Endothelial cell of umbilical vein (primary cell): ENCODE measurements at regions of chr6 and their contacts with region 1.

Region 1: DNA sequence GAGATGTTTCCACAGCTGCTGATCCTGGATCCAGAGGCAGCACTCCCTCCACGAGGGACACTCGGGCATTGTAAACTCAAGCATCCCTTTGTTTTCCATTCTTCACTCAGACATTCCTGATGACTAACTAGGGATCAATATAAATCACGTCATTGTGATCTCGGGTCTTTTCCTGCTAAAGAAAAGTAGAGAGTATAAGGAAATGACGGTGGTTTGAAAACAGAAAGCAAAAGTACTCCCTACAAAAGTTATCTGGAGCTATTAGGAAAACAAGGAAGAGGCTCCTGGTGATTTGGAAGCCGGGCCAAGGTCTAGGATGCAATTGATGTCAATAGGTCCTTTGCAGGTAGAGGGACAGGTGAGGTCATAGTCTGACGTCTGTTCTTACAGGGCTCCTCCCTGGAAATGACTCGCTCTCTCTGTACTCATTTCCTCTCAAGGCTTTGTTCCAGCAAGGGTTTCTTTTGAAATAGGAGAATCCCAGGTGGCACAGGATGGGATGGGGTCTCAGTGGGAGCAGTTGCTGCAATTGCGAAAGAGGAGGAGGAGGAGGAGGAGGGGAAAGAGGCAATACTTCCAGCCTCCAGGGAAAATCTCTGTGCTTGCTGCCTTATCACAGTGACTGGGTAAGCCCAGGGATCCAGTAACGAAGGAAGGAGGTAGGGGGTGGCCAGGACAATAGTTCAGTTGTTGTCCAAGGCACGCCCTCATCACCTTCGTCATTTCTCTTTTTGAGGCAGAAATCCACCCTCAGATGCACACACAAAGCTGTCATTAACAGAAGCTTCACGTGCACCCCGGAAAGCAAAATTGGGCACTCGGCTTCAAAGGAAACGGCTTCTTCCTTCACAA is 222.9 kb downstream of the LY86 start:
- DNase-seq: peak; percentile 91
- H3K4me3 ChIP-seq: peak overlapping the region; percentile 24 to 69 (median 37)
- H3K27ac ChIP-seq: peak overlapping the region; percentile 91
- H3K4me1 ChIP-seq: peaks cover 17% of the 10 kb centered on the region
- H3K27me3 ChIP-seq: peaks cover 2 to 12% of the 10 kb centered on the region in 2 experiments
- CTCF ChIP-seq: no peak
- POLR2A ChIP-seq: no peak

Region 2: GRCh38 chr6:6686748-6687601 is 124.4 kb before region 1 on chr6:
- CTCF ChIA-PET with region 1: no interaction called
- POLR2A ChIA-PET with region 1: no interaction called
- dilution Hi-C with region 1: no loop called
- intact Hi-C with region 1: loop called (anchors 1 kb)
- DNase-seq: peak; percentile 96
- H3K4me3 ChIP-seq: no peak overlapping the region
- H3K27ac ChIP-seq: peak overlapping the region; percentile 36
- H3K4me1 ChIP-seq: peaks cover 43% of the 10 kb centered on the region
- H3K27me3 ChIP-seq: peaks cover 8 to 10% of the 10 kb centered on the region in 2 experiments
- CTCF ChIP-seq: no peak
- POLR2A ChIP-seq: no peak

Region 3: DNA sequence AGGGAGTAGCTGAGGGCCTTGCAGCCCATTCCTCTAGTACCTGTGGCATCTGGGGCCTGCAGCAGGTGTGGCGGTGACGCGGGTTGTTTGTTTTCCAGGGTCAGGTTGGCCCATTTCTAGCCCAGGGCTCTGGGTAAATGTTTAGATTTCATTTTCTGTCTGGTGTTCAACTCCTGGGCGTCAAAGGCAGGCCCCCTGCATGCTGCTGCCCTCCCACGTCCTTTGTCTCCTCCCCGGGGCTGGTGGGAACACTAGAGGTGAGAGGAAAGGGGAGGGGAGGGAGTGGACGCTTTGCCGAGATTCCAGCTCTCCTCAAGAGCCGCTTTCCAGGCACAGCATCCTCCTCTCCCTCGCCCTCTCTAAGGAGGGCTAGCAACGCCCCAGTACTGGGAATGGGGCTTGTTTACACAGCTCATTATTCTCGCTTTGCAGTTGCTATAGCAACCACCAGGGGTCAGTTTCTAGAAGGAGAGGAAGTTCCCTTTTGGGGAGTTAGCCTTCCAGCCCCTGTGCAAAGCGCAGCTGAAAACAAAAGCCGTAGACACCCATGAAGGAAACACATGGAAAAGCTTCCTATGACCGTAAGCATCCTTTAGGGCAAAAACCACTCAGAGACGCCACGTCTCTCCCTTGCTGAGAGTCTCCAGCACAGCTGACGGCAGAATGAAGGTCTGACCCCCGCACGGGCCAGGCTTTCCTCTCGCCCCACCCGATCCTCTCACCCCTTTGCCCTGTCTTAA is 52.3 kb before region 1 on chr6:
- CTCF ChIA-PET with region 1: interaction called, 7 read pairs
- POLR2A ChIA-PET with region 1: no interaction called
- dilution Hi-C with region 1: no loop called
- intact Hi-C with region 1: loop called (anchors 1 kb)
- DNase-seq: peak; percentile 64
- H3K4me3 ChIP-seq: no peak overlapping the region
- H3K27ac ChIP-seq: no peak overlapping the region
- H3K4me1 ChIP-seq: no peaks in the 10 kb centered on the region
- H3K27me3 ChIP-seq: peaks cover 0 to 4% of the 10 kb centered on the region in 2 experiments
- CTCF ChIP-seq: peak; percentile 40 to 45
- POLR2A ChIP-seq: no peak

Region 4: DNA sequence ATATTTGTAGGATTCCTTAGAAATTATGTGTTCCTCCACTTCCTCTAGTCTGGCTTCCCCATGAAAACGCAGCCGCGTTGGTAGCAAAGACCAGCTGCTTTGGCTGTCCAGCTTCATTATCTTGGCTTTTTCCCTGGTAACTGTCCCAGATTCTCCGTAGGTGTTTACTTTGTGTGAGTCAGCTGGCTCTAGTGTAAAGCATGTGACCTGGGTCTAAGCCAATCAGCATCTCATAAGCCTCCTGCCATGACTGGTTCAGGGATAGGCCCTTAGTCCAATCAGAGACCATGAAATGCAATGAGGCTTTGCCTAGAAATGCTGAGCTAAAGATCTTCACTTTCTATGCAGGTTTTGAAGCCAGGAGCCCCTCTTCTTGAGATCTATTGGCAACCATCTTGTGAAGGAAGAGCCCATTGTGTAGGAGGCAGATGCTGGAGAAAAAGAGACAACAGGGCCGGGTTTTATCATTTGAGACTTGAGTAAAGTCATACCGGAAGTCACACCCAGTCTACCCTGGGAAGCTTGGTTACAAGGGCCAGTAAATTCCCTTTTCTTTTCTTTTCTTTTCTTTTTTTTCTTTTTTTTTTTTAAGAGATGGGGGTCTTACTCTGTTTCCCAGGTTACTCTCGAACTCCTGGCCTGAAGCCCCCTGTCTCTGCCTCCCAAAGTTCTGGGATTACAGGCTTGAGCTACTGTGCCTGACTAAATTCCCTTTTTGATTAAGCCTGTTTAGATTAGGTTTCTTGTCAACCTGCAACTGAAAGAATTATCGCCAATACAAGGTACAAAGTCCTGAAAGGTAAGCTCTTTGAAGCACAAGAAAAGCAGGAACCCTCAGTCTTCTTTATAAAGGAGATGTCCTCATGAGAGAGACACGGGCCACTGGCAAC is 39.9 kb after region 1 on chr6:
- CTCF ChIA-PET with region 1: interaction called, 5 read pairs
- POLR2A ChIA-PET with region 1: no interaction called
- dilution Hi-C with region 1: no loop called
- intact Hi-C with region 1: loop called (anchors 1 kb)
- DNase-seq: peak; percentile 92
- H3K4me3 ChIP-seq: no peak overlapping the region
- H3K27ac ChIP-seq: no peak overlapping the region
- H3K4me1 ChIP-seq: no peaks in the 10 kb centered on the region
- H3K27me3 ChIP-seq: no peaks in the 10 kb centered on the region
- CTCF ChIP-seq: no peak
- POLR2A ChIP-seq: no peak

Region 5: DNA sequence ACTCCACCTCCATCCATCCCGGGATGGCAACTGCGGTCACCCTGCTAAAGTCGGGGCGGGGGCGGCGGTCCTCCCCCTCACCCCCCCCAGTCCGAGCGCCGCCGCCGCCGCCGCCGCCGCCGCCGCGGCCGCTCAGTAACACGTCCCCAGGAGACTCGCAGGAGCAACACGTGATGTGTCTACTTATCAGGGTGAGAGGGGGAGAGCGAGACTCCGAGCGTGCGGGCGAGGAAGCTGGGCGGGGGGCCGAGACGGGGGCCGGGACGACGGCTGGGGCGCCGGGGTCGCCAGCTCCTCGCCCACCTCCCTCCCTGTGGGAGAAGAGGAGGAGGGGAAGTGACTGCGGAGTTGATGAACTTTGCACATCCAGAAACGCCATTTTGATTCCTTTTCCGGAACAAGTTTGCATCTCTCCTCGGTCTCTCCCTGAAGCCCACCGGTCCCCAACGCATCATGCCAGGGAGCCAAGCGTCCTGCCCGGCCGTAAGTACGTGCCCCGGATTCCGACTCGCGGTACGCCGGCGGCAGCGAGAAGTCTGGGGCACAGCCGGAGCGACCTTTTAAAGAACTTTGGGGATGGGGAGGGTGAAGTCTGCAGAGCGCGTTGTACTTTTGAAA is 296.3 kb after region 1 on chr6 and contains the start of gene RREB1:
- CTCF ChIA-PET with region 1: no interaction called
- POLR2A ChIA-PET with region 1: no interaction called
- dilution Hi-C with region 1: no loop called
- intact Hi-C with region 1: loop called (anchors 1 kb)
- DNase-seq: peak; percentile 68
- H3K4me3 ChIP-seq: peak within 1 kb of the TSS; percentile 87 to 99 (median 93)
- H3K27ac ChIP-seq: peak within 1 kb of the TSS; percentile 71
- H3K4me1 ChIP-seq: peaks cover 13% of the 10 kb centered on the region
- H3K27me3 ChIP-seq: no peaks in the 10 kb centered on the region
- CTCF ChIP-seq: no peak
- POLR2A ChIP-seq: no peak
- total RNA-seq, gene RREB1: 30.8 and 33.0 TPM in 2 replicates